ENCODE measurements at regions of chr10 and their contacts with region 1.

Region 1: DNA sequence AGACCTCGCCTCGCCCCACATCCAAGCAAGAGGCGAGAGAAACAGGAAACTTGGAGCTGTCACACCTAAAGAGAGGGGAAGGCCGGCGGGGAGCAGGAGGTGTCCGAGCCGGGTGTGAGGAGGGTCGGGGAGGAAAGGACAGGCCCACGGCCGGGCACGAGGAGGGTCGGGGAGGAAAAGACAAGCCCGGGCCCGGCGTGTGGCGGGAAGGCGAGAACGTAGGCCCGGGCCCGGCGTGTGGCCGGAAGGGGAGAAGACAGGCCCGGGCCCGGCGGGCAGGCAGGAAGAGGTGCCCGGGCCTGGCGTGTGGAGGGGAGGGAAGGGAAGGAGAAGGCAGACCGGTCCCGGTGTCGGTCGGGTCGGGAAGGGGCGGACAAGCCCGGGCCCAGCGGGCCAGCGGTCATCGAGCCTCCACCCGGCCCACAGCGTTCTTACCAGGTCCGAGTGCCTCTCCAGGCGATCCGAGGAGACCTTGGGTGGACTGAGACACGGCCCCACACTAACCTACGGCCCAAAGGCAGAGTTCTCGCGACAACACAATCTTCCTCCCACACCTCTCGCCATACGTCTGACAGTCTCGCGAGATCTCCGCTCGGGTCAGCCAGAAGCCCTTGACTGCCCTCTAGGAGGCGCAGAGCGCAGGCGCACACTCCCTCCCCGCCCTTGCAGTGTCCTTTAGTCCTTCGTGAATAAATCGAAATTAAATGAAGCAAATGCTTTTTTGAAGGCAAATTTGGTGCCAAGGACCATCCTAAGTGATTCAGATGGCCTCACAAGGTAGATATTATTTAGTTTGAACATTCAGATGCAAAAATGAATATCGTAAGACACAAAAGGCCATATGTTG is at the start of gene NCOA4:
- DNase-seq: peak; percentile 87 to 99 (median 96)
- ATAC-seq: peak; percentile 97
- H3K4me3 ChIP-seq: peak within 1 kb of the TSS; percentile 86 to 97
- H3K4me3 Mint-ChIP-seq: peak within 1 kb of the TSS; percentile 99
- H3K27ac ChIP-seq: peak within 1 kb of the TSS; percentile 84 to 98
- H3K27ac Mint-ChIP-seq: peak within 1 kb of the TSS; percentile 95
- H3K4me1 ChIP-seq: peaks cover 48% of the 10 kb centered on the region
- H3K4me1 Mint-ChIP-seq: peaks cover 49% of the 10 kb centered on the region
- H3K27me3 ChIP-seq: no peaks in the 10 kb centered on the region
- H3K27me3 Mint-ChIP-seq: no peaks in the 10 kb centered on the region
- CTCF ChIP-seq: peak; percentile 69
- total RNA-seq, gene NCOA4: 47.4 to 51.5 TPM

Region 2: DNA sequence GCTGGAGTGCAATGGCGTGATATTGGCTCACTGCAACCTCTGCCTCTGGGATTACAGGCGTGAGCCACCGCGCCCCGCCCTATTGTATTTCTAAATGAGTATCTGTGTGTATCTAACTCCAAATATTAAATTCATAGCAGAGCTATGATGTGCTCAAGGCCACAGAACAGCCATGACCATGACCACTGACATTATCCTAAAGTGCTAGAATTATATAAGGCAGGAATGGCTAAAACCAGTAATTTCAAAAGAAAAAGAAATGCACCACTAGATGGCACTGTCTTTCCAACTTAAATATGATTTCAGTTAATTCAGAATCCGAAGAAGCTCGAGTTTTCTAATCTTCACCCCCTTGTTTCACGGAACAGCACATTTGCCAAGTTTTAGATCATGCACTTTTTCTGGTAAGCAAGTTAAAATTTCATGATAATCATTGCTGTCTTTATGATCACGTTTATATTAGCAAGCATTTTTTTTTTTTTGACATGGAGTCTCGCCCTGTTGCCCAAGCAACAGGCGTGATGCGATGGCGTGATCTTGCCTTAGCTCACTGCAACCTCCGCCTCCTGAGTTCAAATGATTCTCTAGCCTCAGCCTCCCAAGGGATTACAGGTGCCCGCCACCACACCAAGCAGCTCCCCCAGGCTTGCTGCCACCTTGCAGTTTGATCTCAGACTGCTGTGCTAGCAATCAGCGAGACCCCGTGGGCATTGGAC is 780.2 kb before region 1 on chr10:
- CTCF ChIA-PET with region 1: interaction called, 3 read pairs
- POLR2A ChIA-PET with region 1: interaction called, 4 read pairs
- intact Hi-C with region 1: loop called in 1 of 2 experiments (anchors 2 kb)
- DNase-seq: peak in 2 of 9 experiments; percentile 48 to 68
- ATAC-seq: peak; percentile 36
- H3K4me3 ChIP-seq: no peak overlapping the region
- H3K4me3 Mint-ChIP-seq: no peak overlapping the region
- H3K27ac ChIP-seq: no peak overlapping the region
- H3K27ac Mint-ChIP-seq: no peak overlapping the region
- H3K4me1 ChIP-seq: peaks cover 4% of the 10 kb centered on the region
- H3K4me1 Mint-ChIP-seq: peaks cover 4% of the 10 kb centered on the region
- H3K27me3 ChIP-seq: no peaks in the 10 kb centered on the region
- H3K27me3 Mint-ChIP-seq: peaks cover 4% of the 10 kb centered on the region
- CTCF ChIP-seq: peak; percentile 64

Region 3: DNA sequence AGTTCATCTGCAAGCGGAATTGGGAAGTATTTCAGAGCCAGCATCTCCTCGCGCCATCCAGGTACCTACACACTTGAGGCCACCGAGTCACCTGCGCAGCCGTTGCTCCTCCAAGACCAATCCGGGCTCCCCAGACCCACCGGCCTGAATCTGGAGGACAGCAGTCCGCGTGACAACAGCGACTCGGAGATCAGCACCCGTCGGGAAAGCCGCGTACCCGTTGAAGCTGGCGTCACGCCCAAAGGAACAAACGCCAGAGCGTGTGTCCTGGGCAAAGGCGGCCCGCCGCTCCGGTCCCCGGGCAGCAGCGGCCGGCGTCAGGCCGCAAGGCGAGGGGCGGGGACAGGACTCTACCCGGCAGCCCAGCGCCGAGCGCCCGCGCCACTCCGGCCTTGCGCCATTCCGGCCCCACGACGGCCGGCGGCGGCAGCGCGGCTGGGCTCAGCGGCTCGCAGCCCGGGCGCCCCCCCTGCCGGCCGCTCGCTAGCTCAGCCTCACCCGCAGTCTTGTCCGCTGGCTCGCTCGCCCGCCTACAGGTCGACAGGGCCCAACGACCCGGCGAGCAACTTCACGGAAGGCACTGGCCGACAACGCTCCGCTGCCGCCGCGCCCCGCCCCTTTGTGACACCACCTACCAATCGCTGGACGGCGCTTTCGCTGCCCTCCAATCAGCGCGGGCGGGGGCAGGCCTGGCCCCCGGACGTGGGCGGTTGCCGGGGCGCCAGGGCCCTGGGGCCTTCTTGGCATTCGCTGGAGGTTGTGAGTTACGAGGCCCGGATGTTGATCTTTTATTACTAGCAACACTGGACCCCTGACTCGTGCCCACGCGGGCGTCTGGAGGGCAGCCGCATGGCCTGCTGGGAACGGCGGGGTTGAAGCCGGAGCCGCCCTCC is 357.9 kb before region 1 on chr10 and contains the start of gene ZFAND4:
- CTCF ChIA-PET with region 1: no interaction called
- POLR2A ChIA-PET with region 1: no interaction called
- intact Hi-C with region 1: loop called in 1 of 2 experiments (anchors 5 kb)
- DNase-seq: peak; percentile 88 to 98 (median 93)
- ATAC-seq: peak; percentile 97
- H3K4me3 ChIP-seq: peak within 1 kb of the TSS; percentile 82 to 88
- H3K4me3 Mint-ChIP-seq: peak within 1 kb of the TSS; percentile 90
- H3K27ac ChIP-seq: peak within 1 kb of the TSS; percentile 69 to 86
- H3K27ac Mint-ChIP-seq: peak within 1 kb of the TSS; percentile 90
- H3K4me1 ChIP-seq: peaks cover 5% of the 10 kb centered on the region
- H3K4me1 Mint-ChIP-seq: peaks cover 45% of the 10 kb centered on the region
- H3K27me3 ChIP-seq: no peaks in the 10 kb centered on the region
- H3K27me3 Mint-ChIP-seq: no peaks in the 10 kb centered on the region
- CTCF ChIP-seq: peak; percentile 20
- total RNA-seq, gene ZFAND4: 34.7 to 36.6 TPM

Region 4: GRCh38 chr10:46092524-46093081 is 62.3 kb after region 1 on chr10:
- CTCF ChIA-PET with region 1: interaction called, 6 read pairs
- POLR2A ChIA-PET with region 1: interaction called, 4 read pairs
- intact Hi-C with region 1: loop called in 1 of 2 experiments (anchors 5 kb)
- DNase-seq: peak in 5 of 9 experiments; percentile 13 to 80 (median 43)
- ATAC-seq: peak; percentile 25
- H3K4me3 ChIP-seq: peak overlapping the region; percentile 54 to 63
- H3K4me3 Mint-ChIP-seq: no peak overlapping the region
- H3K27ac ChIP-seq: peak overlapping the region; percentile 54 to 64
- H3K27ac Mint-ChIP-seq: no peak overlapping the region
- H3K4me1 ChIP-seq: peaks cover 79% of the 10 kb centered on the region
- H3K4me1 Mint-ChIP-seq: peaks cover 9% of the 10 kb centered on the region
- H3K27me3 ChIP-seq: peaks cover 0 to 2% of the 10 kb centered on the region in 2 experiments
- H3K27me3 Mint-ChIP-seq: no peaks in the 10 kb centered on the region
- CTCF ChIP-seq: no peak

Region 5: GRCh38 chr10:46223064-46223480 is 192.8 kb after region 1 on chr10:
- CTCF ChIA-PET with region 1: no interaction called
- POLR2A ChIA-PET with region 1: no interaction called
- intact Hi-C with region 1: no loop called
- DNase-seq: peak in 1 of 9 experiments; percentile 19
- ATAC-seq: no peak
- H3K4me3 ChIP-seq: no peak overlapping the region
- H3K4me3 Mint-ChIP-seq: no peak overlapping the region
- H3K27ac ChIP-seq: no peak overlapping the region
- H3K27ac Mint-ChIP-seq: peak overlapping the region; percentile 55
- H3K4me1 ChIP-seq: no peaks in the 10 kb centered on the region
- H3K4me1 Mint-ChIP-seq: peaks cover 6% of the 10 kb centered on the region
- H3K27me3 ChIP-seq: no peaks in the 10 kb centered on the region
- H3K27me3 Mint-ChIP-seq: no peaks in the 10 kb centered on the region
- CTCF ChIP-seq: no peak

Region 6: GRCh38 chr10:46284293-46285229 is 254.2 kb after region 1 on chr10:
- CTCF ChIA-PET with region 1: no interaction called
- POLR2A ChIA-PET with region 1: no interaction called
- intact Hi-C with region 1: loop called (anchors 2 to 5 kb)
- DNase-seq: peak; percentile 42 to 86 (median 73)
- ATAC-seq: peak; percentile 72
- H3K4me3 ChIP-seq: peak overlapping the region; percentile 58 to 67
- H3K4me3 Mint-ChIP-seq: peak overlapping the region; percentile 92
- H3K27ac ChIP-seq: peak overlapping the region in 1 of 2 experiments; percentile 26
- H3K27ac Mint-ChIP-seq: peak overlapping the region; percentile 27
- H3K4me1 ChIP-seq: peaks cover 10% of the 10 kb centered on the region
- H3K4me1 Mint-ChIP-seq: peaks cover 18% of the 10 kb centered on the region
- H3K27me3 ChIP-seq: no peaks in the 10 kb centered on the region
- H3K27me3 Mint-ChIP-seq: no peaks in the 10 kb centered on the region
- CTCF ChIP-seq: no peak

Region 7: DNA sequence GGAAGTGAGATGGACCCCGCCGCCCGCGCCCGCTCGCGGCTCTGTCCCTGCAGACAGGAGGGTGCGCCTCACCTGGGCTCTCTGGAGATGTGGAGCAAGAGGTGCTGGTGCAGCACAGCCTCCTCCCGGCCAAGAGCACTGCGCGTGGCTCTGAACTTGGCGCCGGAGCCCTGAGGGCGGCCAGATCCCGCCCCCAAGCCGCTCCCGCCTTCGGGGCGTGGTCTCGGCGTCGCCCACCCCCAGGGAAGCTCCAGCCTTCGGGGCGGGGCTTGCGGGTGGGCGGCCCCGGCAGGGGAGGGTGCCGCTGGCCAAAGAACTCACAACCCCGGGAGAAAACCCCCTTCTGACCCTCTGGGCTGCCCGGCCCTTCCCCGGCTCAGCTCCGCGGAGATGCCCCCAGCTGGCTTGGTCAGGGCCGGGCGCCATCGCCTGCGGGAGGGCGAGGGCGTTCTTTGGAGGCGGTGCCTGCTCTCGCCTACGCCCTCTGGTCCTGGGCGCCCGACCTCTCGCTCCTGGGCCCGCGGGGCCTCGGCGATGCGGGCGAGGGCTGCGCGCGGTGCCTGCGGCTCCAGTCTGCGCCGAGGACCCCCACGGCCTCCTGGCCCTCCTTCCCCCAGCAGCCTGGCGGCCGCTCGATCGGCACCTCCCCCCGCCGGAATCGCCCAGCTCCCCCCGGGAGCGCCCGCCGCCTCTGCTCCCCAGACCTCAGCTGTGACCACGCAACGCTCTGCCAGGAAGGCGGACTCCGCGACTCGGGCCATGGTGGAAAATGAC is 1354.0 kb after region 1 on chr10 and contains the start of gene ZNF488:
- CTCF ChIA-PET with region 1: no interaction called
- POLR2A ChIA-PET with region 1: no interaction called
- intact Hi-C with region 1: loop called in 1 of 2 experiments (anchors 5 kb)
- DNase-seq: peak; percentile 34 to 85 (median 65)
- ATAC-seq: peak; percentile 94
- H3K4me3 ChIP-seq: peak within 1 kb of the TSS; percentile 60 to 73
- H3K4me3 Mint-ChIP-seq: peak within 1 kb of the TSS; percentile 91
- H3K27ac ChIP-seq: no peak within 1 kb of the TSS
- H3K27ac Mint-ChIP-seq: no peak within 1 kb of the TSS
- H3K4me1 ChIP-seq: no peaks in the 10 kb centered on the region
- H3K4me1 Mint-ChIP-seq: peaks cover 9% of the 10 kb centered on the region
- H3K27me3 ChIP-seq: no peaks in the 10 kb centered on the region
- H3K27me3 Mint-ChIP-seq: peaks cover 31% of the 10 kb centered on the region
- CTCF ChIP-seq: no peak
- total RNA-seq, gene ZNF488: not detected

Measured in CD8-positive, alpha-beta T cell (primary cell).